Pancreas (tissue), 10 donors: ENCODE measurements at regions of chr12 and their contacts with region 1.

Region 1: DNA sequence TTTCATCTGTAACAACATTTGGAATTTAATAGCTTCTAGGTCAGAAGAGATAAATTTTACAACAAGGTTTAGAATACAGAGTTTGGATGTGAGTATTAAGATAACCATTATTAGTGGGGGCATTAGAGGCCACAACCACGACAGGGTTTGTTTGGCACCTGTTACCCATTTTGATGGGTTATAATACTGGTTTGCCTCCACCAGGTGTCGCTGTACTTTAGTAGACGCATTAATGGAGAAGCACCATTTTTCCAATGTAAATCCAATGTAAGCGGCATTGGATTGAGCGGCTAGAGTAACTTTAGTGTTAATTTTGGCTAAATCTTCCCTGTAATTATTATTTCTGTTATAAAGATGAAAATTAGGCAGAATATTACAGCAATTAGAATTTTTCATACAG is 136.2 kb downstream of the SLCO1B3 start:
- DNase-seq: peak in 3 of 6 donors; percentile 19 to 38 (median 29)
- ATAC-seq: peak in 3 of 4 donors; percentile 56 to 75 (median 68)
- H3K4me3 ChIP-seq: no peak overlapping the region
- H3K27ac ChIP-seq: no peak overlapping the region
- H3K4me1 ChIP-seq: no peaks in the 10 kb centered on the region
- H3K27me3 ChIP-seq: no peaks in the 10 kb centered on the region
- CTCF ChIP-seq: peak in 3 of 4 donors; percentile 29 to 47 (median 43)

Region 2: DNA sequence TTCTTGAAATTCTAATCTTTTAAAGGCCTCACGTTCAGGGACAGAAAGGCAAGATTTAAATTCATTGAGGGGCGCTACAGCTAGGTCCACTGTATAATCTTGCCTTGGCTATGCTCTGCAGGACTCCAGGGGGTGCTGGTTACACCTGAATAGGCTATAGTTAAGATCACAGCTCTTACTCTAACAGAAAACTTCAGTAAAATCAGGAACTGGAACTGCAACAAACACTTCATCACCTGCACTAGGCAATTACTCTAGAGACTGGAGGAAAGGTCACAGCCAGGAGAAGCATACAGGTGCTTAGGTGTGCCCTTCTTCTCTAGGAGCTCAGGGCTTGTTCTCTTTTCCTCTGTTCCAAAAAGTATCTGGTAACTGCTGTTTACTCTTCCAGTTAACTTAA is 230.7 kb before region 1 on chr12:
- intact Hi-C with region 1: no loop called
- DNase-seq: no peak
- ATAC-seq: no peak
- H3K4me3 ChIP-seq: no peak overlapping the region
- H3K27ac ChIP-seq: no peak overlapping the region
- H3K4me1 ChIP-seq: no peaks in the 10 kb centered on the region
- H3K27me3 ChIP-seq: no peaks in the 10 kb centered on the region
- CTCF ChIP-seq: no peak

Region 3: GRCh38 chr12:21054334-21054733 is 107.6 kb after region 1 on chr12:
- intact Hi-C with region 1: no loop called
- DNase-seq: no peak
- ATAC-seq: no peak
- H3K4me3 ChIP-seq: no peak overlapping the region
- H3K27ac ChIP-seq: no peak overlapping the region
- H3K4me1 ChIP-seq: no peaks in the 10 kb centered on the region
- H3K27me3 ChIP-seq: no peaks in the 10 kb centered on the region
- CTCF ChIP-seq: no peak

Region 4: GRCh38 chr12:21065845-21066244 is 119.1 kb after region 1 on chr12:
- intact Hi-C with region 1: loop called in 1 of 3 experiments (anchors 5 kb)
- DNase-seq: peak in 1 of 6 donors; percentile 18
- ATAC-seq: peak in 3 of 4 donors; percentile 60 to 81 (median 81)
- H3K4me3 ChIP-seq: no peak overlapping the region
- H3K27ac ChIP-seq: no peak overlapping the region
- H3K4me1 ChIP-seq: no peaks in the 10 kb centered on the region
- H3K27me3 ChIP-seq: no peaks in the 10 kb centered on the region
- CTCF ChIP-seq: peak in 3 of 4 donors; percentile 24 to 41 (median 39)

Region 5: GRCh38 chr12:21113266-21113665 is 166.5 kb after region 1 on chr12:
- intact Hi-C with region 1: no loop called
- DNase-seq: no peak
- ATAC-seq: no peak
- H3K4me3 ChIP-seq: no peak overlapping the region
- H3K27ac ChIP-seq: no peak overlapping the region
- H3K4me1 ChIP-seq: no peaks in the 10 kb centered on the region
- H3K27me3 ChIP-seq: no peaks in the 10 kb centered on the region
- CTCF ChIP-seq: no peak

Region 6: DNA sequence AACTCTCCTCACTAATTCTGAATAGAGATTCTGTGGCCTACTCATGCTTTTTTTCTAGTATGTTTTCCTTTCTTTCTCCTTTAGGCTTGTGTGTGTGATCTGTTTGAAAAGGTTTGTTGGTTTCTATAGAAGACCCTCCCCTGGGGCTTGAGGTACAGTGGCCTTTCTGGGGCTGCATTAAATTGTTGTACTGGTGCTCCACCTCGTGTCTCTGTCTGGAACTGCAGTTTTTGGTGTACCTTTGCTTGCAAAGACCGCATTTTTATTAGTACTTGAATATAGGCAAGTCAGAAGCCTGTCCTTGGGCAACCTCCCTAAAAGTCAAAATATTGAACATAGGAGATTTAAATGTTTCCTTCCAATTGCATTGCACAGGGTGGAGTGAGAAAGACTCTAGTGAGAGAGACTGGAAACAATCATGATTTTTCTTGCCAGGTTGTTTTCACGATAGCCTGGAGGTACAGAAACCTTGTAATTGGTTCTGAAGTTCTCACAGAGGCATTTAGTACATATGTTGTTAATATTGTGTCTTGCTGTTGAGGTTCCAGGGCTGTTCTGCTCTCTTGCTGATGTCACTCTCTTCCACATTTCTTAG is 223.2 kb after region 1 on chr12:
- intact Hi-C with region 1: loop called in 1 of 3 experiments (anchors 5 kb)
- DNase-seq: peak in 5 of 6 donors; percentile 7 to 63 (median 43)
- ATAC-seq: peak in 3 of 4 donors; percentile 48 to 71 (median 51)
- H3K4me3 ChIP-seq: no peak overlapping the region
- H3K27ac ChIP-seq: no peak overlapping the region
- H3K4me1 ChIP-seq: no peaks in the 10 kb centered on the region
- H3K27me3 ChIP-seq: no peaks in the 10 kb centered on the region
- CTCF ChIP-seq: peak in 3 of 4 donors; percentile 28 to 59 (median 46)